ENCODE measurements at regions of chr10 and their contacts with region 1.

Region 1: GRCh38 chr10:119199231-119199992 is 8.0 kb upstream of the GRK5 start:
- DNase-seq: peak; percentile 44
- H3K4me3 Mint-ChIP-seq: no peak overlapping the region
- H3K27ac Mint-ChIP-seq: no peak overlapping the region
- H3K4me1 Mint-ChIP-seq: no peaks in the 10 kb centered on the region
- H3K27me3 Mint-ChIP-seq: no peaks in the 10 kb centered on the region
- CTCF ChIP-seq: no peak

Region 2: DNA sequence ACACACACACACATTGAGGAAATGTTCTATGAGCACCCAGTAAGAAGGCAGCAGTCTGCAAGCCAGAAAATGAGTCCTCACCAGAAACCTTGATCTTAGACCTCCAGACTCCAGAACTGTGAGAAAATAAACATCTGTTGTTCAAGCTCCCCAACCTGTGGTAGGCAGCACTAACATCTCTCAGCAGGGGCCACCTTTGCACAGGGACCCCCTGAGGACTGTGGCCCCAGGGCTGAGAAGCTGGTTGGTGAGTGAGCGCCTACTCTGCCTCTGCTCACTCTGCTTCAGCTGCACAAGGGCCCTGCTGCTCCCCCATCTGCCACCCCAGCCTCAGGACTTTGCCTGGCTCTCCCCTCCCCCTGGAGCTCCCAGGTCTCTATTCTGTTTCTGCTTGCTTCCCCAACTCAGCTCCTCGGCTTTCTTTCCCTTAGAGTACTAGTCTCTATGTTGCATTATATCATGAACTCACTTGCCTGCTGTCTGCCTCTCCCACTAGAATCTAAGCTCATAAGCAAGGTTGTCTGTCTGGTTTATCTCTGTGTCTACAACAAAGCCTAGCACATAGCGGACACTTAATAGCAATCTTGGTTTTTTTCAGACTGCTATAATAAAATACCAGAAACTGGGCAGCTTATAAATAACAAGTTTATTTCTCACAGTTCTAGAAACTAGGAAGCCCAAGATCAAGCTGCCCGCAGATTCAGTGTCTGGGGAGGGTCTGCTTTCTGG is 563.6 kb before region 1 on chr10:
- CTCF ChIA-PET with region 1: no interaction called
- intact Hi-C with region 1: no loop called
- DNase-seq: no peak
- H3K4me3 Mint-ChIP-seq: no peak overlapping the region
- H3K27ac Mint-ChIP-seq: no peak overlapping the region
- H3K4me1 Mint-ChIP-seq: no peaks in the 10 kb centered on the region
- H3K27me3 Mint-ChIP-seq: peaks cover 92% of the 10 kb centered on the region
- CTCF ChIP-seq: no peak

Region 3: GRCh38 chr10:118882741-118883140 is 316.7 kb before region 1 on chr10:
- CTCF ChIA-PET with region 1: no interaction called
- intact Hi-C with region 1: no loop called
- DNase-seq: no peak
- H3K4me3 Mint-ChIP-seq: no peak overlapping the region
- H3K27ac Mint-ChIP-seq: no peak overlapping the region
- H3K4me1 Mint-ChIP-seq: no peaks in the 10 kb centered on the region
- H3K27me3 Mint-ChIP-seq: no peaks in the 10 kb centered on the region
- CTCF ChIP-seq: no peak

Region 4: GRCh38 chr10:119416855-119417254 is 217.4 kb after region 1 on chr10:
- CTCF ChIA-PET with region 1: interaction called, 4 read pairs
- intact Hi-C with region 1: loop called (anchors 1 kb)
- DNase-seq: peak; percentile 58
- H3K4me3 Mint-ChIP-seq: no peak overlapping the region
- H3K27ac Mint-ChIP-seq: no peak overlapping the region
- H3K4me1 Mint-ChIP-seq: no peaks in the 10 kb centered on the region
- H3K27me3 Mint-ChIP-seq: peaks cover 14% of the 10 kb centered on the region
- CTCF ChIP-seq: no peak

Region 5: GRCh38 chr10:119445311-119445934 is 246.0 kb after region 1 on chr10:
- CTCF ChIA-PET with region 1: interaction called, 11 read pairs
- intact Hi-C with region 1: loop called (anchors 2 kb)
- DNase-seq: peak; percentile 82
- H3K4me3 Mint-ChIP-seq: no peak overlapping the region
- H3K27ac Mint-ChIP-seq: no peak overlapping the region
- H3K4me1 Mint-ChIP-seq: peaks cover 8% of the 10 kb centered on the region
- H3K27me3 Mint-ChIP-seq: no peaks in the 10 kb centered on the region
- CTCF ChIP-seq: peak; percentile 69

Region 6: GRCh38 chr10:119466655-119467054 is 267.2 kb after region 1 on chr10:
- CTCF ChIA-PET with region 1: no interaction called
- intact Hi-C with region 1: no loop called
- DNase-seq: peak; percentile 35
- H3K4me3 Mint-ChIP-seq: no peak overlapping the region
- H3K27ac Mint-ChIP-seq: no peak overlapping the region
- H3K4me1 Mint-ChIP-seq: peaks cover 13% of the 10 kb centered on the region
- H3K27me3 Mint-ChIP-seq: no peaks in the 10 kb centered on the region
- CTCF ChIP-seq: no peak

Region 7: DNA sequence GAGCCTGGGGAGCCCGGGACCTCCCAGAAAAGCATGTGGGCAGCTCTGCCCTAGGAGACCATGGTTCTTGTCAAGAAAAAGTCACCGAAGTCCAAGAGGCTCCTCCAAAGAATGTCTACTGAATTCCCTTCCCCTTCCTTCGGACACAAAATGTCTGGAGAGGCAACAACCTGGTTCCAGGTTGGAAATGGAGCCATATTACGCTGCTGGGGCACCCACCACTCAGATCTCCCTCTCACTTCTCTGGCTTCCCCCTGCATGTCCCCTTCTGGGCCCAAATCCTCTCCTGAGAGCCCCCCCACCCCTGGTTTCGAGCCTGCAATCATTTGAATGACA is 290.5 kb after region 1 on chr10:
- CTCF ChIA-PET with region 1: interaction called, 13 read pairs
- intact Hi-C with region 1: loop called (anchors 5 kb)
- DNase-seq: no peak
- H3K4me3 Mint-ChIP-seq: peak overlapping the region; percentile 39
- H3K27ac Mint-ChIP-seq: no peak overlapping the region
- H3K4me1 Mint-ChIP-seq: no peaks in the 10 kb centered on the region
- H3K27me3 Mint-ChIP-seq: no peaks in the 10 kb centered on the region
- CTCF ChIP-seq: no peak

Region 8: DNA sequence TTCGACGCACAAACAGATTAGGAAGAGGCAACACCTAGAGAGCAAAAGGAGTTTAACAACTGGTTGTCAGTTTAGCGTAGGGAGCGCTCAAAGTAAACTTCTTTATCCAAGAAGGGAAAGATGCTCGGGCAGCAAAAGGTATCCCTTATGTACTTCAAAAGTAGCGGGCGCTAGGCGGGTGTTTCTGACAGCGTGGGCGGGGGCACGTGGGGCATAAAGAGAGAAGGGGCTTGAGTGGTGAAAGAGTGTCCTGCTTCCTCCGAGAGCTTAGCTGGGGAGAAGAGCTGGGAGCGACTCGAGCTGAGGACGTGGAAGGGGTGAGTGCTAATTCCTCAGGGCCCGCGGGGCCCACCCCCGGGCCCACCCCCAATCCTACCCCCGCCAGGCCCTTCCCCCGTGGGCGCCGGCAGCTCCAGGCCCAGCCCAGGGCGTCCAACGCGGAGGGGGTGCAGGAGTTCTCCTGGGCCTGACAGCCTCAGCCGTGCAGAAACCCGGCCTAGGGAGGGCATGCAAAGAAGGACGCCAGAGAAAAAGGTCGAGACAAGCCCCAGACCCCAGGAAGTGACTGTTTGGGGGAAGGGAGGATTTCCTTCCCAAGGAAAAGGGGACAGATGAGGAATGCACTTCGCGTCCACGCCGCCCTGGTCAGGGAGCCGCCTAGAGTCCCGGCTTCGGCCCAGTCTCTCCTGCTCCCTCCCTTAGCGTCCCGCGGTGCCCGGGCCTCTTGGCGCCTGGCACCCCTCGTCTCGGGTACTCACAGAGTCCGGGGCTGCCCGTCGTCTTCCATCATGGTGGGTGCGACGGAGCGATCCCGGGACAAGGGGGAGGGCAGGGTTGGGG is 396.5 kb after region 1 on chr10:
- CTCF ChIA-PET with region 1: no interaction called
- intact Hi-C with region 1: loop called (anchors 2 kb)
- DNase-seq: peak; percentile 6
- H3K4me3 Mint-ChIP-seq: peak overlapping the region; percentile 89
- H3K27ac Mint-ChIP-seq: peak overlapping the region; percentile 90
- H3K4me1 Mint-ChIP-seq: peaks cover 20% of the 10 kb centered on the region
- H3K27me3 Mint-ChIP-seq: no peaks in the 10 kb centered on the region
- CTCF ChIP-seq: no peak

Measured in Calu3 (cell line).